Endothelial cell of umbilical vein (primary cell): ENCODE measurements at regions of chr11 and their contacts with region 1.

Region 1: DNA sequence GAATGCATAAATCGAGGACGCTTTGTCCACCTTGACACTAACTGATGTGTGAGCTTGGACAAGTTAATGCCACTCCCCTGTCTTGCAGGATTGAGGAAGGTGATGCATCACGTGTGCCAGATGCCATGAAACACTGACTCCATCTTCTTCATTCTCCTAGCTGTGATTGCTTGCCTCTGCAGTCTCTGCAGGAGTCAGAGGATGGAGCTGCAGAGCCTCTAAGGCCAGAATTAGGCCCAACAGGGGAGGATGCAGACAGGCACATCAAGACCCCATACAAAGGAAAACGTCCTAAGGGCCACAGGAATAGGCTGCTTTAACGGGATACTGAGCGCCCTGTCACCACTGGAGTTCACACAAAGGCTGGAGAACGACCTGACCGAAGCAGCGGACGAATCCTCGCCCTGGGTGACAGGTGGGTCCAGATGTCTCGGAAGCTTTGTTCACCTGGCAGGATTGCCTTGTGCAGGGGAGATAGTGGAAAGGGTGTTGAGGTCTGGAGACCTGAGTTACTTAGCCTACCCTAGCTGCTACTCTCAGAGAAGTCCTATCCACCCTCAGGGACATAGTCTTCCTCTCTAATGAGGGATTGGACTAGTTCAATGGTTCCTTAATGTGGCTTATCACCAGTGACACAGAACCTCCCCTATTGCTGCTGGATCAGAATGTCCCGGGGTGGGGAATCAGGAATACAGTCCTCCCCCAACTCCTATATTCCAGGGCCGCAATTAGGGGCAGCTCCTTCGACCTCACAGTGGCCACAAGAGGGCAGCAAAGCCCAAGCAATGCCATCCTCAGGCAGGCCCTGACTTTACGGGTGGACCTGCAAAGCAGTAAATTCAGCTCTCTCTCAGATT is 32.4 kb downstream of the DBX1 start:
- DNase-seq: peak; percentile 69
- H3K4me3 ChIP-seq: no peak overlapping the region
- H3K27ac ChIP-seq: no peak overlapping the region
- H3K4me1 ChIP-seq: peaks cover 4% of the 10 kb centered on the region
- H3K27me3 ChIP-seq: no peaks in the 10 kb centered on the region
- CTCF ChIP-seq: peak; percentile 82 to 91
- POLR2A ChIP-seq: no peak

Region 2: DNA sequence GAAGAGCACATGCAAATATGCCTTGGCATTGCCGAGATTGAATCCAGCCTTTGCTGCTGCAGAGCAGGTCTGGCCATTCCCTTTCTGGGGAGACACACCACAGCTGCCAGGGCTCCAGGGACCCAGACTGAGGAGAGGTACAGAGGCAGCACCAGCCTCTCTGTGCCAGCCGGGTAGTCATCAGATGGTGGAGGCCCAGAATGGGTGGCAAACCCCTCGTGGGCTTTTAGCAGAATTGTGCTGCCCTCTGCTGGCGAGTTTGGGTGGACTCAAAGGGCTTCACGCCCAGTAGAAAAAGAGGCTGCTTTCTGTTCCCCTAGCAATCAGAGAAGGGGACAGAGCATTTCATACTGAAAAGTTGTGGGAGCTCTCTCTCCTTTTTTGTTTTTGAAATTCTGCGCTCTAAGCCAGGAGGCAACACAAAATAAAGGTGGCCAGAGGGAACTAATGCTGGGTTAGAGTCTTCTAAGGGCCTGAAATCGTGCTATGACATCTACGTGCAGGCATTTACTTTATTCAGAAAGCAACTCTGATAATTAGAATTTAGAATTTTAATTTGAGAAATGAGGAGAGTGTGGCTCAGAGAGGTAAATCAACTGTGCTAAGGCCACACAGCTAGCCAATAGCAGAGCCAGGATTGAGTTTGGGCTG is 574.1 kb before region 1 on chr11:
- CTCF ChIA-PET with region 1: interaction called, 6 read pairs
- POLR2A ChIA-PET with region 1: no interaction called
- dilution Hi-C with region 1: no loop called
- intact Hi-C with region 1: loop called (anchors 1 kb)
- DNase-seq: peak; percentile 65
- H3K4me3 ChIP-seq: no peak overlapping the region
- H3K27ac ChIP-seq: no peak overlapping the region
- H3K4me1 ChIP-seq: no peaks in the 10 kb centered on the region
- H3K27me3 ChIP-seq: no peaks in the 10 kb centered on the region
- CTCF ChIP-seq: peak; percentile 79 to 81
- POLR2A ChIP-seq: no peak

Region 3: GRCh38 chr11:19790831-19791552 is 336.9 kb before region 1 on chr11:
- CTCF ChIA-PET with region 1: no interaction called
- POLR2A ChIA-PET with region 1: no interaction called
- dilution Hi-C with region 1: no loop called
- intact Hi-C with region 1: no loop called
- DNase-seq: no peak
- H3K4me3 ChIP-seq: no peak overlapping the region
- H3K27ac ChIP-seq: no peak overlapping the region
- H3K4me1 ChIP-seq: peaks cover 2% of the 10 kb centered on the region
- H3K27me3 ChIP-seq: no peaks in the 10 kb centered on the region
- CTCF ChIP-seq: no peak
- POLR2A ChIP-seq: no peak

Region 4: DNA sequence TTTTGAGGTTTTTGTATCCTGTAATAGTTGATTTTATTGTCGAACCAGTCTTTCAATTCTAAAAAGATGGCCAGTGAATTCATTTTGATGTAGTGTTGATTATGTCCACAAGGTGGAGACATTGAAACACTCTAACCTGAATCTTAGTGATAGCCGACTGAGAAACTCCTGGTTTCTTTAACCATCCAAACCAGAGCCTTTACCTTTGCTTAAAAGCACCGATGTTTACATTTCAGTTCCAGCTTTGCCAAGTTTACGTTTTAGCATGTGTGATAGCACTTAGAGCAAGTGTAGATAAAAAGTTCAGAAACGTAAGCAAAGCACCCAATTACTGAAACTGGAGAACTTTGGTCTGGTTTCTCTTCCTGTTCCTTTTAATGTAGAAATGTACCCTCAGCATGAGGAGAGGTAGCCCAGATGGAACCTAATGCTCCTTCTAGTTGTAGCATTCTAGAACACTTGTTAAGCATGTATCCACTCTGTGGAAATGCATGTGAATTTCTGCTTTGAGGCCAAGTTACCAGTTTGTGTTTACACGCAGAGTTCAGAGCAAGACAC is 176.3 kb before region 1 on chr11:
- CTCF ChIA-PET with region 1: interaction called, 91 read pairs
- POLR2A ChIA-PET with region 1: no interaction called
- dilution Hi-C with region 1: no loop called
- intact Hi-C with region 1: loop called (anchors 1 kb)
- DNase-seq: peak; percentile 81
- H3K4me3 ChIP-seq: no peak overlapping the region
- H3K27ac ChIP-seq: peak overlapping the region; percentile 40
- H3K4me1 ChIP-seq: peaks cover 27% of the 10 kb centered on the region
- H3K27me3 ChIP-seq: no peaks in the 10 kb centered on the region
- CTCF ChIP-seq: peak; percentile 33 to 50
- POLR2A ChIP-seq: no peak

Region 5: GRCh38 chr11:20110908-20111669 is 16.8 kb before region 1 on chr11:
- CTCF ChIA-PET with region 1: interaction called, 68 read pairs
- POLR2A ChIA-PET with region 1: no interaction called
- dilution Hi-C with region 1: no loop called
- intact Hi-C with region 1: no loop called
- DNase-seq: peak; percentile 61
- H3K4me3 ChIP-seq: no peak overlapping the region
- H3K27ac ChIP-seq: peak overlapping the region; percentile 88
- H3K4me1 ChIP-seq: peaks cover 38% of the 10 kb centered on the region
- H3K27me3 ChIP-seq: no peaks in the 10 kb centered on the region
- CTCF ChIP-seq: peak; percentile 83 to 89
- POLR2A ChIP-seq: no peak

Region 6: DNA sequence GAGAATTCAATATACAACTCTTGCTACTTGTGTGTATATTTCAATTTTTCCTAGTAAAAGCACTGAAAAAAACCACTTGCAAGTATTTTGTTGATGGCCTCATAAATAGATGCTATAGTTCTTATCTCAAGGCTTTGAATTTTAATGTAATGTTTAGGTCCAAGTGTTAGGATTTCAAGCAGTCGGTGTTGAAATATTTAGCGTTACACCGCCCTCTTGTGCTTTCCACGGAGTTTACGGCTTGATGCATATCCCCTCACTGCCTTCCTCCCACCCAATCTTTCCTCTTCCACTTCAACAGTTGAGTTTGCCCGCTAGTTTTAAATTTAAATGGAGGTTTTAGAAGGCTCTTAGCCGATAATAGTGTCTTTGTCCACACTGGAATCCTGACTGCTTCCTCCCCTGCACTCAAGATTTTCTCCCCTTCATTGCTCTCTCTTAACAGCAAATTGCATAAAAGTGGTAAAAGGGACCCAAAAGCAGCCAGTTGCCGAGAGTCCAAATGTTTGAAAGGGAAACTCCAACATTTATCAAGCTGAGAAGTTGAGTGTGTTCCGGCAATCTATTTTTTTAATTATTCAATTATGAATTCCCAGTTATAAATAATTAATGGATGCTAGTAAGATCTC is 209.7 kb after region 1 on chr11:
- CTCF ChIA-PET with region 1: interaction called, 16 read pairs
- POLR2A ChIA-PET with region 1: no interaction called
- dilution Hi-C with region 1: no loop called
- intact Hi-C with region 1: loop called (anchors 1 kb)
- DNase-seq: peak; percentile 43
- H3K4me3 ChIP-seq: no peak overlapping the region
- H3K27ac ChIP-seq: no peak overlapping the region
- H3K4me1 ChIP-seq: no peaks in the 10 kb centered on the region
- H3K27me3 ChIP-seq: peaks cover 28 to 63% of the 10 kb centered on the region in 2 experiments
- CTCF ChIP-seq: peak; percentile 13 to 47
- POLR2A ChIP-seq: no peak

Region 7: GRCh38 chr11:20443596-20443995 is 315.7 kb after region 1 on chr11:
- CTCF ChIA-PET with region 1: interaction called, 17 read pairs
- POLR2A ChIA-PET with region 1: no interaction called
- dilution Hi-C with region 1: no loop called
- intact Hi-C with region 1: loop called (anchors 5 kb)
- DNase-seq: peak; percentile 42
- H3K4me3 ChIP-seq: no peak overlapping the region
- H3K27ac ChIP-seq: no peak overlapping the region
- H3K4me1 ChIP-seq: no peaks in the 10 kb centered on the region
- H3K27me3 ChIP-seq: no peaks in the 10 kb centered on the region
- CTCF ChIP-seq: peak in 1 of 2 donors; percentile 16
- POLR2A ChIP-seq: no peak

Region 8: GRCh38 chr11:20671856-20672546 is 544.1 kb after region 1 on chr11:
- CTCF ChIA-PET with region 1: interaction called, 13 read pairs
- POLR2A ChIA-PET with region 1: no interaction called
- dilution Hi-C with region 1: no loop called
- intact Hi-C with region 1: no loop called
- DNase-seq: no peak
- H3K4me3 ChIP-seq: no peak overlapping the region
- H3K27ac ChIP-seq: no peak overlapping the region
- H3K4me1 ChIP-seq: no peaks in the 10 kb centered on the region
- H3K27me3 ChIP-seq: peaks cover 33 to 48% of the 10 kb centered on the region in 2 experiments
- CTCF ChIP-seq: no peak
- POLR2A ChIP-seq: no peak